ENCODE measurements at regions of chr3 and their contacts with region 1.

Region 1: DNA sequence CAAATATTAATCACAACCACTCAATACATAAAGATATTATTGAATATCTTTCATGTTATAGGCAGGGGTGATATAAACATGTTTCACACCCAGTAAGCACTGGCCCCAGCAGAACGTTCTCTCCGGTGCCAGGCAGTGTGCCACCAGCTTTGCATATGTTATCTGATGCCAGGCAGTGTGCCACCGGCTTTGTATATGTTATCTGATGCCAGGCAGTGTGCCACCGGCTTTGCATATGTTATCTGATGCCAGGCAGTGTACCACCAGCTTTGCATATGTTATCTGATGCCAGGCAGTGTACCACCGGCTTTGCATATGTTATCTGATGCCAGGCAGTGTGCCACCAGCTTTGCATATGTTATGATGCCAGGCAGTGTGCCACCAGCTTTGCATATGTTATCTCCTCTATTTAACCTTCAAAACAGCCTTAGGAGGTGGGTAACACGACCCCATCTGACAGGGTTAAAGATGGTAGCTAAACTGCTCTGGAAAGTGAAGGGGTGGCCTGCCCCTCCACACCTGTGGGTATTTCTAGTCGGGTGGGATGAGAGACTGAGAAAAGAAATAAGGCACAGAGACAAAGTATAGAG is 6.9 kb downstream of the MUC20 start:
- DNase-seq: no peak
- ATAC-seq: no peak
- H3K4me3 ChIP-seq: no peak overlapping the region
- H3K27ac ChIP-seq: no peak overlapping the region
- H3K4me1 ChIP-seq: no peaks in the 10 kb centered on the region
- H3K27me3 ChIP-seq: no peaks in the 10 kb centered on the region

Region 2: DNA sequence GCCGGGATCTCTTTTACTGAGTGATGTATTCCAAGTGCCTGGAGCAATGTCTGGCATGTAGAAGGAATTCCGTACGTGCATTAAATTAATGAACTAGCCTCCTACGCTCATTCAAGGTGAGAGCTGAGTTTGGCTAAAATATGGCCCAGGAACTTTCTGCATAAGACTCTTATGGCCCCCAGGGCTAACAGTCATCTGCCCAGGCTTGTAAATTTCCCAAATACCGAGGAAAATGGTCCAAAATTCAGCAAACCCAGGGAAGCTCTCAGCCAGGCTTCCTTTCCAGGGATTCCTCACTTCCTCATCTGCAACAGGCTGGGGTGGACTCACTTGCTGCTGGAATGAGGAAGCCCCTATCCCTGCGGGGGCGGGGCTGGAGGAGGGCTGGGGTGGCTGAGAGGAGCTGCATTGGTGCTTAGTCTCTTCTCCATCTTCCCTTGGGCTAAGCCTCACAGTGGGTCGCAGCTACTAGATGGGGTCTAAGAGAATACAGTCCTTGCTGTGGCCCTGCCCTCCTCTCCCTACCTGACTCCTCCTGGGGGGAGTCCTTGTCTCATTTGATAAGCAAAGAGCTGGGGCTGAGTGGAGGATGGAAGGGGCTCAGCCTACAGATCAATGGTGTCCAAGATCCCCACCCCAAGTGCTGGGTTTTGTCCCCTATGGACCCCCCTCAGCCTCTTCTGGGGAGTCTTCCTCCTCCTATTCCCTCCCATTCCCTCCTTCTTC is 115.5 kb before region 1 on chr3:
- intact Hi-C with region 1: loop called in 1 of 4 experiments (anchors 10 kb)
- DNase-seq: no peak
- ATAC-seq: no peak
- H3K4me3 ChIP-seq: no peak overlapping the region
- H3K27ac ChIP-seq: no peak overlapping the region
- H3K4me1 ChIP-seq: no peaks in the 10 kb centered on the region
- H3K27me3 ChIP-seq: no peaks in the 10 kb centered on the region